MCF 10A (cell line): ENCODE measurements at regions of chr5 and their contacts with region 1.

Region 1: GRCh38 chr5:127988146-127988760 is 95.3 kb upstream of the SLC12A2 start:
- DNase-seq: peak; percentile 94
- H3K4me3 Mint-ChIP-seq: no peak overlapping the region
- H3K27ac Mint-ChIP-seq: peak overlapping the region; percentile 71
- H3K4me1 Mint-ChIP-seq: peaks cover 14% of the 10 kb centered on the region
- H3K27me3 Mint-ChIP-seq: no peaks in the 10 kb centered on the region
- CTCF ChIP-seq: no peak

Region 2: GRCh38 chr5:128038643-128039042 is 50.4 kb after region 1 on chr5:
- CTCF ChIA-PET with region 1: no interaction called
- POLR2A ChIA-PET with region 1: interaction called, 14 read pairs
- intact Hi-C with region 1: no loop called
- DNase-seq: peak; percentile 32
- H3K4me3 Mint-ChIP-seq: no peak overlapping the region
- H3K27ac Mint-ChIP-seq: no peak overlapping the region
- H3K4me1 Mint-ChIP-seq: peaks cover 41% of the 10 kb centered on the region
- H3K27me3 Mint-ChIP-seq: no peaks in the 10 kb centered on the region
- CTCF ChIP-seq: no peak